Naive thymus-derived CD8-positive, alpha-beta T cell (primary cell): ENCODE measurements at regions of chr2 and their contacts with region 1.

Region 1: GRCh38 chr2:85538486-85539360 is at the start of gene MAT2A:
- DNase-seq: peak; percentile 71 to 91 (median 86)
- ATAC-seq: peak; percentile 74 to 76
- H3K4me3 Mint-ChIP-seq: peak within 1 kb of the TSS; percentile 91 to 96 (median 95)
- H3K27ac Mint-ChIP-seq: peak within 1 kb of the TSS; percentile 90 to 98 (median 95)
- H3K4me1 Mint-ChIP-seq: peaks cover 21 to 50% (median 40%) of the 10 kb centered on the region in 4 donors
- H3K27me3 Mint-ChIP-seq: no peaks in the 10 kb centered on the region
- polyA plus RNA-seq, gene MAT2A: 68.1 to 103 (median 73.0) TPM

Region 2: DNA sequence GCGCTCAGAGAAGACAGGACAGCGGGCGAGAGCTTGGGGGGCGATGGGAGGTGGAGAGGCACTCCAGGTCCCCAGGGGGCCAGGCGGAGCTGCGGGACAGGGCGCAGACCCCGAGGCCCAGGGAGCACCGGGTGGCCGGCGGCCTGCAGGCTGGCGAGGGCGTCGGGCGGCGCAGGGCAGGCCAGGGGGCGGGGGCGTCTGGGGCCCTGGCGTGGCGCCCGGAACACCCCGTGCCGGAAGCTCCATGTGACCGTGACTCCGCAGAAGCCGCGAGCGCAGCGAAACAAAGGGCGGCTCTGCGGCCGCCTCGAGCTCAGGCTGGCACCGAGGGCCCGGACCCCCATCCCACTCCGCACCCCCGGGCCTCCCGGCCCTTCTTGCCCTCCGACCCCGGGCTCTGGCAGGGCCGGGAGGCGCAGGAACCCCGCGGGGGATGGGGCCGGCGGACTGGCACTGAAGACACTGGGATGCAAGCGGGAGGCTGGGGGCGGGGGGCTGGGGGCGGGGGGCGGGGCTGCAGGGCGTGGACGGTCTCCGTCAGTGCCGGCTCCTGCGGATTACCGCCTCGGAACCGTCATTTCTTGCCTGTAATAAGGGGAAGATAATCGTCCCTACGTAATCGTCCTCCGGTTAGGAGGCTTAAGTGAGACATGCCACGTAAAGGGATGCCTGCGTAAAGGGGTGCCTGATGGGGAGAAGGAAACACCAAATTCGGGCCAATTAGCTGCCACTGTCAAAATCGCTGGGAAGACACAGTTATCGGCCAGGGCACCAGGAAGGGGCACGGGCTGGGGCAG is 101.0 kb before region 1 on chr2:
- POLR2A ChIA-PET with region 1: interaction called, 119 read pairs
- DNase-seq: peak; percentile 57 to 83 (median 72)
- ATAC-seq: peak; percentile 88 to 92
- H3K4me3 Mint-ChIP-seq: peak overlapping the region; percentile 78 to 98 (median 89)
- H3K27ac Mint-ChIP-seq: peak overlapping the region; percentile 89 to 97 (median 95)
- H3K4me1 Mint-ChIP-seq: peaks cover 13 to 43% (median 41%) of the 10 kb centered on the region in 4 donors
- H3K27me3 Mint-ChIP-seq: no peaks in the 10 kb centered on the region

Region 3: GRCh38 chr2:85570297-85570696 is 31.6 kb after region 1 on chr2:
- POLR2A ChIA-PET with region 1: no interaction called
- DNase-seq: no peak
- ATAC-seq: no peak
- H3K4me3 Mint-ChIP-seq: no peak overlapping the region
- H3K27ac Mint-ChIP-seq: peak overlapping the region in 1 of 10 donors; percentile 71
- H3K4me1 Mint-ChIP-seq: no peaks in the 10 kb centered on the region
- H3K27me3 Mint-ChIP-seq: peaks cover 0 to 2% (median 0%) of the 10 kb centered on the region in 5 donors

Region 4: GRCh38 chr2:85611705-85612587 is 73.2 kb after region 1 on chr2 and contains the start of gene C2orf68:
- POLR2A ChIA-PET with region 1: interaction called, 23 read pairs
- DNase-seq: peak; percentile 65 to 89 (median 77)
- ATAC-seq: peak; percentile 60 to 63
- H3K4me3 Mint-ChIP-seq: peak within 1 kb of the TSS; percentile 91 to 99 (median 98)
- H3K27ac Mint-ChIP-seq: peak within 1 kb of the TSS; percentile 72 to 98 (median 95)
- H3K4me1 Mint-ChIP-seq: peaks cover 12 to 42% (median 32%) of the 10 kb centered on the region in 4 donors
- H3K27me3 Mint-ChIP-seq: no peaks in the 10 kb centered on the region
- polyA plus RNA-seq, gene C2orf68: 15.7 to 21.1 (median 20.4) TPM